AG04449 (cell line): ENCODE measurements at regions of chr3 and their contacts with region 1.

Region 1: DNA sequence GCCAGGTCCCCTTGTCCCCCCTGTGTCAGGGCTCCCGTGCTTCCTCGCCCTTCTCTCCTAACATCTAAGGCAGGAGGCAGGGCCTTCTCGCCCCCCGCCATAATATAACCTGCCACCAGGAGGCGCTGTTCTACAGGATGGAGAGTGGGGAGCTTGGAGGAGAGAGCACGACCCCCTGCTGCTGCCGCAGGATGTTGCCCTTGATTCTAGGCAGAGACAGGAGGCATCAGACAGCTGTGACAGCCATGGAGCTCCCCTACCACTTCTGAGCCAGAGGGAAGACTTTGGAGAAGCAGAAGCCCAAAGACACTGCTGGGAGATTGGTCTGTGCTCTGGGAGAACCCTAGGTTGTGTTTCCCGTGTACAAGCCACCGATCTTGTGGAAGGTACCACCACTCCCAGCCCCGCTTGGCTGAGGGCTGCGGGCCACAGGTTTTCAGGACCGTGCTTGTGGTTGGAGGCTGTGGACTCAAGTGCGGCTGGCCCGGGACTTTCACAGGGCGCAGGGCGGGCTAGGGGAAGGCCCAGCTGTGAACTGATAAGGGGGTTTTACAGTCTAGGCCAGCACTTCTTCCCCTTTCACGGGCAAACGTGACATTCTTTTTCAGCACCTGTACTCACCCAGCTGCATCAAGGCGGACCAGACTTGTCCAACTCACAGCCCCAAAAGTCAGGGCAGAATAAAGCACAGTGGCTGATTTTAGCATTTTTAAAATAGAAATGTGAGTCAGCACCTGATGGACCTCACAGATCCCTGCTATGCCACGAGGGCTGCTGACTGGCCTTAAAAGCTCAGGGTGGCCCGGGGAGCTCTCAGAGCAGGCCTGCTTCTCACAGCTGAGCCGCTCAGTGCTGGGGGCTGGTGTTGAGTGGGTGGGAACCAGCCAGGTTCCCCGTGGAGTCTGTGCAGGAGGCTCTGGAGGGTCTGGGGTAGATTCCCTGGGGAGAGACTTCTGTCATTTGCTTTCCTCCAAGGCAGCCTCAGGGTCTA is 2.6 kb upstream of the TIGIT start:
- DNase-seq: no peak
- H3K4me3 ChIP-seq: no peak overlapping the region
- CTCF ChIP-seq: peak; percentile 67

Region 2: DNA sequence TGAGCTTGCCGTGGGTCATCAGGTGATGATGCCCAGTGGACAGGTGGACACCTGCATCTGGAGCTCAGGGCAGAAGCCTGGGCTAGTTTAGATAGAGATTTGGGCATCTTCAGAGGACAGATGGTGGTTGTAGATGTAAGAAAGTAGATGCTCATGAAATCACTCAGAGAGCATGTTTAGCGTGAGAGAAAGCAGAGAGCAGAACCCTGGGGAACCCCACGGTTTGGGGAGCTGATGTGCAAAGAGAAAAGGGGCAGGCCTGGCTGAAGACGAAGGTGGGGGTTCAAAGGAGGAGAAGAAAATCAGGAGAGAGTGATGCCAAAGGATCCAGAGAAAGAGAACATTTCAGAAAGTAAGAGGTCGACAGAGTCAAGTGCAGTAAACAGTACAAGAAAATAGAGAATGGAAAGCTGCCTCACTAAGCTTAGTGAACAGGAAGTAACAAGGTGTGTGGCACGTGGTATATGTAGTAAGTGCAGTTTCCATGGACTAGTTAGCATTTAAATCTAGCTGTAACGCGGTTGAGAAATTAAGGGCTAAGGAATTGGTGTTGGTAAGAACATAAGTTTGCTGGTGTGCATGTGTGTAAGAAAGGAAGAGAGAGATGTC is 16.1 kb after region 1 on chr3:
- CTCF ChIA-PET with region 1: interaction called, 16 read pairs
- POLR2A ChIA-PET with region 1: no interaction called
- DNase-seq: no peak
- H3K4me3 ChIP-seq: no peak overlapping the region
- CTCF ChIP-seq: no peak